HepG2 (cell line): ENCODE measurements at regions of chr5 and their contacts with region 1.

Region 1: GRCh38 chr5:73856997-73857396 is 231.0 kb downstream of the ARHGEF28 start:
- DNase-seq: no peak
- ATAC-seq: no peak
- H3K4me3 ChIP-seq: no peak overlapping the region
- H3K27ac ChIP-seq: peak overlapping the region; percentile 67
- H3K4me1 ChIP-seq: peaks cover 55% of the 10 kb centered on the region
- H3K27me3 ChIP-seq: no peaks in the 10 kb centered on the region
- CTCF ChIP-seq: no peak
- EP300 ChIP-seq: no peak
- POLR2A ChIP-seq: no peak
- RAD21 ChIP-seq: no peak

Region 2: GRCh38 chr5:73822997-73823355 is 34.0 kb before region 1 on chr5:
- CTCF ChIA-PET with region 1: no interaction called
- POLR2A ChIA-PET with region 1: no interaction called
- in situ Hi-C with region 1: no loop called
- intact Hi-C with region 1: loop called (anchors 5 kb)
- DNase-seq: peak; percentile 85
- ATAC-seq: peak; percentile 77
- H3K4me3 ChIP-seq: peak overlapping the region in 2 of 3 experiments; percentile 37 to 41; a peak in 2 of 6 replicates
- H3K27ac ChIP-seq: peak overlapping the region; percentile 83
- H3K4me1 ChIP-seq: peaks cover 92% of the 10 kb centered on the region
- H3K27me3 ChIP-seq: no peaks in the 10 kb centered on the region
- CTCF ChIP-seq: no peak
- EP300 ChIP-seq: peak in 1 of 2 experiments; percentile 50; a peak in 2 of 4 replicates
- POLR2A ChIP-seq: no peak
- RAD21 ChIP-seq: no peak

Region 3: GRCh38 chr5:73867345-73868335 is 10.6 kb after region 1 on chr5:
- CTCF ChIA-PET with region 1: no interaction called
- POLR2A ChIA-PET with region 1: no interaction called
- in situ Hi-C with region 1: no loop called
- intact Hi-C with region 1: loop called (anchors 2 kb)
- DNase-seq: no peak
- ATAC-seq: no peak
- H3K4me3 ChIP-seq: no peak overlapping the region
- H3K27ac ChIP-seq: no peak overlapping the region
- H3K4me1 ChIP-seq: peaks cover 30% of the 10 kb centered on the region
- H3K27me3 ChIP-seq: no peaks in the 10 kb centered on the region
- CTCF ChIP-seq: no peak
- EP300 ChIP-seq: no peak
- POLR2A ChIP-seq: no peak
- RAD21 ChIP-seq: no peak